ENCODE measurements at regions of chr5 and their contacts with region 1.

Region 1: GRCh38 chr5:170315154-170315553 is 17.6 kb upstream of the LCP2 start:
- DNase-seq: no peak
- H3K4me3 ChIP-seq: no peak overlapping the region
- H3K27ac ChIP-seq: no peak overlapping the region
- H3K4me1 ChIP-seq: peaks cover 0 to 6% (median 1%) of the 10 kb centered on the region in 4 experiments; a peak in 5 of 7 replicates
- H3K27me3 ChIP-seq: no peaks in the 10 kb centered on the region
- CTCF ChIP-seq: no peak
- EP300 ChIP-seq: no peak
- POLR2A ChIP-seq: no peak
- RAD21 ChIP-seq: no peak

Region 2: DNA sequence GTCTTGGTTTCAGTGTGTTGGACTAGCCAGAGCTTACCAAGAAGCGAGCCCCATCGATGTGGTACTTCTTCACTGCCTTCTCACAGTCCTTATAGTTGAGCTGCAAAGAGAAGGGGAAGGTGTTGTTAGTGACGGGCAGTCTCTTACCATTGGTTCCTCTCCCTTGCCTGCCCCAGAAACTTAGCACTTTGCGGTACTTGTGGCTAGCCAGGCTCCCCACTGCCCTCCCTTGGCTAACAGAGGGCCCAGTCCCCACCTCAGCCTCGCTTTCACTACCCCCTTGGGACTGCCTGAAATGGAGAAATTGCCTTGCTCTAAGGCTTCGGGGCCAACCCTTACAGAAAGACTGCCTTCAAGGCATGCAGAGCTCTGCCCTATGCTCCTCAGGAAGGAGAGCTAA is 21.9 kb before region 1 on chr5:
- CTCF ChIA-PET with region 1: interaction called, 10 read pairs
- POLR2A ChIA-PET with region 1: no interaction called
- DNase-seq: no peak
- H3K4me3 ChIP-seq: no peak overlapping the region
- H3K27ac ChIP-seq: no peak overlapping the region
- H3K4me1 ChIP-seq: peaks cover 0 to 3% (median 1%) of the 10 kb centered on the region in 4 experiments; a peak in 2 of 7 replicates
- H3K27me3 ChIP-seq: peaks cover 0 to 1% (median 0%) of the 10 kb centered on the region in 4 experiments; a peak in 2 of 7 replicates
- CTCF ChIP-seq: no peak
- EP300 ChIP-seq: no peak
- POLR2A ChIP-seq: no peak
- RAD21 ChIP-seq: peak in 1 of 2 experiments; percentile 7; a peak in 1 of 4 replicates

Measured in H1 (cell line).